Caco-2 (cell line): ENCODE measurements at regions of chr7 and their contacts with region 1.

Region 1: GRCh38 chr7:79341902-79342301 is 111.6 kb downstream of the MAGI2 start:
- DNase-seq: peak in 1 of 2 experiments; percentile 9
- H3K4me3 ChIP-seq: no peak overlapping the region
- H3K4me3 Mint-ChIP-seq: no peak overlapping the region
- H3K27ac Mint-ChIP-seq: no peak overlapping the region
- H3K4me1 ChIP-seq: no peaks in the 10 kb centered on the region
- H3K4me1 Mint-ChIP-seq: no peaks in the 10 kb centered on the region
- H3K27me3 ChIP-seq: no peaks in the 10 kb centered on the region
- H3K27me3 Mint-ChIP-seq: no peaks in the 10 kb centered on the region
- CTCF ChIP-seq: peak in 1 of 2 experiments; percentile 36

Region 2: DNA sequence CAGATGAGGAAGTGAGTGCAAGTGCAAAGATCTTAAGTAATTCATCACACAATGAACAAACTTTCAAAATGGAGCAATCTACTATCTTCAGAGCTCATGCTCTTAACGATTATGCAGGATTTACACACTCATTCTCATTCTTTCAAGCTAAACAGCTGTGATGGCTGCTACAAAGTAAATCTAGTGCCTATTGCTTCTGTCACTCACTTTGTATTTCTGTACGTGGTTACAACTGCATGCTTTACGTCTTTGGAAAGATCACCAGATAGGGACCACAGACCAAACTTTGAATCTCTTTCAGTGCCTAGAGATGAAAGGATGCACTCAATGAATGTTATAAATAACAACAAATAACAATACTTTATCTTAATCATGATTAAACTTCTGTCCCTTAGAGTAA is 83.1 kb before region 1 on chr7:
- CTCF ChIA-PET with region 1: no interaction called
- POLR2A ChIA-PET with region 1: no interaction called
- intact Hi-C with region 1: no loop called
- DNase-seq: no peak
- H3K4me3 ChIP-seq: no peak overlapping the region
- H3K4me3 Mint-ChIP-seq: no peak overlapping the region
- H3K27ac Mint-ChIP-seq: no peak overlapping the region
- H3K4me1 ChIP-seq: no peaks in the 10 kb centered on the region
- H3K4me1 Mint-ChIP-seq: no peaks in the 10 kb centered on the region
- H3K27me3 ChIP-seq: no peaks in the 10 kb centered on the region
- H3K27me3 Mint-ChIP-seq: no peaks in the 10 kb centered on the region
- CTCF ChIP-seq: no peak

Region 3: GRCh38 chr7:79548727-79549126 is 206.8 kb after region 1 on chr7:
- CTCF ChIA-PET with region 1: no interaction called
- POLR2A ChIA-PET with region 1: no interaction called
- intact Hi-C with region 1: loop called (anchors 10 kb)
- DNase-seq: no peak
- H3K4me3 ChIP-seq: no peak overlapping the region
- H3K4me3 Mint-ChIP-seq: no peak overlapping the region
- H3K27ac Mint-ChIP-seq: no peak overlapping the region
- H3K4me1 ChIP-seq: no peaks in the 10 kb centered on the region
- H3K4me1 Mint-ChIP-seq: no peaks in the 10 kb centered on the region
- H3K27me3 ChIP-seq: no peaks in the 10 kb centered on the region
- H3K27me3 Mint-ChIP-seq: no peaks in the 10 kb centered on the region
- CTCF ChIP-seq: no peak

Region 4: DNA sequence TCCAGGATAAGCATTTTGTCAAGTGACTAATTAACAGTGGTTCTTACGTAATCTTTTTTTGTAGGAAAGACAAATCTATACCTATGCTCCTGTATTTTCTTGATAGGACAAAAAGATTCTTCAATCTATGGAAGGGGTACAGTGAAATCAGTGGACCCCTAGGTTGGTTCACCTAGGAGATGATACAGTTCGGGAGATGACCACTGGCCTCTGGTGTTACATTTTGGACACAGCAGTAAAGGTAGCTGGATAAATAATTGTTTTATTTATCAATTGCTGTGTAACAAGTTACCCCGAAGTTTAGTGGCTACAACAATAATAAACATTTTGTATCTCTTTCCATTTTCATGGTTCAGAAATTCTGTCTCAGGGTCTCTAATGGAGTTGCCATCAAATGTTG is 399.8 kb after region 1 on chr7:
- CTCF ChIA-PET with region 1: no interaction called
- POLR2A ChIA-PET with region 1: no interaction called
- intact Hi-C with region 1: loop called (anchors 1 kb)
- DNase-seq: no peak
- H3K4me3 ChIP-seq: no peak overlapping the region
- H3K4me3 Mint-ChIP-seq: no peak overlapping the region
- H3K27ac Mint-ChIP-seq: no peak overlapping the region
- H3K4me1 ChIP-seq: no peaks in the 10 kb centered on the region
- H3K4me1 Mint-ChIP-seq: no peaks in the 10 kb centered on the region
- H3K27me3 ChIP-seq: no peaks in the 10 kb centered on the region
- H3K27me3 Mint-ChIP-seq: no peaks in the 10 kb centered on the region
- CTCF ChIP-seq: peak; percentile 46 to 61